CD8-positive, alpha-beta T cell (primary cell): ENCODE measurements at regions of chr1 and their contacts with region 1.

Region 1: DNA sequence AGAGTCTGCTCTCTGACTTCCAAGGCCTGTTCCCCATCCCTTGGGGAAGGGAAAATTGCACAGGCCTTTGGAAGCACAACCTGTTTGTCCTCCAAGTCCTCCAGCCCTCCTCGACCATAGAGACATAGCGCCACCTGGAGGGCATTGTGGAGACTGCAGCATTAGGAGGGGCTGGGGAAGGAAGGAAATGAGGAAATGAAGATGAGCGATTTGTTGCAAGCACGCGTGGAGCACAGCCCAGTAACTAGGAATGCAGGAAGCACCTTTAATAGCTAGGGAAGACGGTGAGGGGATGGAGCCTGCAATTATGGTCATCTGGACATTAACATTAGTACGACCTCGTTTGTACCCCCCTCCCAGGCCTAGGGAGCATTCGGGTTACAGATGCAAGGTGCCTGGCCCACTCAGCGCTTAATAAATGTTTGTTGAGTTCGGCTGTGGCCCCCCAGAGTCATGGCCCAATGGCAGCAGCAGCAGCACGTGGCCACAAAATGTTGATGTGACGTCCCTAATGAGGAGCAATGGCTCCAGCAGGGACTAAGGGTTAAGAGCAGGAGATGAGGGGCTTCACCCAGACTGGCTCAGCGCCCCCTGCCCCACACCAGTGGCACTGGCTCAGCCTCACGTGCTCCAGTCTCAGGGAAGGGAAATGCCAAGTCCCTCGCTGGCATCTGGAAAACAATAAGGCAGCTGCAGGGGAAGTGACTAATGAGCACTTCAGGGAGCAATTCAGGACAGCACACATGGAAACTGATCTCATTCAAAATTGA is 8.0 kb upstream of the CAMK2N1 start:
- DNase-seq: peak; percentile 66 to 92 (median 83)
- ATAC-seq: peak; percentile 90
- H3K4me3 ChIP-seq: no peak overlapping the region
- H3K4me3 Mint-ChIP-seq: no peak overlapping the region
- H3K27ac ChIP-seq: no peak overlapping the region
- H3K27ac Mint-ChIP-seq: no peak overlapping the region
- H3K4me1 ChIP-seq: peaks cover 7% of the 10 kb centered on the region
- H3K4me1 Mint-ChIP-seq: peaks cover 3% of the 10 kb centered on the region
- H3K27me3 ChIP-seq: no peaks in the 10 kb centered on the region
- H3K27me3 Mint-ChIP-seq: no peaks in the 10 kb centered on the region
- CTCF ChIP-seq: peak; percentile 87

Region 2: DNA sequence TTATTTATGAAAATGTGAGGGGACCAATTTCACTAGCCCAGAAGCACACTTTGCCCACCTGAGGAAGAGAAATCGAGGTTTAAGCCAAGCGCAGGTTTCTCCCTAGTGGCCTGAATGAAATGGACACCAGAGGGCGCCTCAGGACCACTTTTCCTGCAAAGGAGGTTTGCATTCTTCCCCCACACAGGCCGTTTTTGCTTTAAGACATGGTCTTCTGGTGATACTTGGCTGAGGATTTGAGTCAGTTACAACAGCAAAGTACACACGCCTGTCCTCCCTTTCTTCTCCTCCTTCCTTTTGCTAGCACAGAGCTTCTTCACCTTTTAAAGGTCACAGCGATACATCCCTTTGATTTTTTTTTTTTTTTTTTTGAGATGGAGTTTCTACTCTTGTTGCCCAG is 576.0 kb before region 1 on chr1:
- CTCF ChIA-PET with region 1: interaction called, 3 read pairs
- POLR2A ChIA-PET with region 1: no interaction called
- intact Hi-C with region 1: loop called in 1 of 2 experiments (anchors 1 kb)
- DNase-seq: peak; percentile 67 to 88 (median 81)
- ATAC-seq: peak; percentile 57
- H3K4me3 ChIP-seq: no peak overlapping the region
- H3K4me3 Mint-ChIP-seq: no peak overlapping the region
- H3K27ac ChIP-seq: no peak overlapping the region
- H3K27ac Mint-ChIP-seq: no peak overlapping the region
- H3K4me1 ChIP-seq: no peaks in the 10 kb centered on the region
- H3K4me1 Mint-ChIP-seq: peaks cover 2% of the 10 kb centered on the region
- H3K27me3 ChIP-seq: no peaks in the 10 kb centered on the region
- H3K27me3 Mint-ChIP-seq: peaks cover 5% of the 10 kb centered on the region
- CTCF ChIP-seq: peak; percentile 88

Region 3: DNA sequence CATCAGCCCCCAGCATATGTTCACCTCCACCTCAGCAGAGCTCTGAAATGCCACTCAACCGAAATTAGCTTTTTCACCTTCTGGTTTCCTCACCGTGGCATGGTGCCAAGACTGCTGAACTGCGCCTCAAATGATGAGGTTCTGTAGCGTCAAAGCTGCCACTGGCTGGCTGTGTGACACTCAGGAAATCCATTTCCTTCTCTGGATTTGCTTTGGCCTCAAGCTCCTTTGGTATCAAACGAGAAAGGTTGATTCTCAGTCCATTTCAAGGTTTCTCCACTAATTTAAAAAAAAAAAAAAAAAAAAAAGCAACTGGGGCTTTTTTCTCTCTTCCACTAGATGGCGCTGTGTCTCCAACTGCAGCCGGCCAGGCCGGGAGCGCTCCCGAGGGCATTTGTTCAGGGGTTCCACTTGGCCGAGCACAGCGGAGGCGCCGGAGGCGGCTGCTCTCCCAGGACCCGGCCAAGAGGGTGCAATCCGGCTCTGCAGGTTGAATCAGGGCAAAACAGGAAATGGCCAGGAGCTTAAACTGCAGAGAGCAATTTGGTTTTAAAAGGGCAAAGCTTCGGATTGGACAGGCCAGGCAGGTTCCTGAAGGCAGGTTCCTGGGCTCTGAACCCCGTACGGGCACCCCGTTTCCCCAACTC is 281.2 kb before region 1 on chr1:
- CTCF ChIA-PET with region 1: interaction called, 75 read pairs
- POLR2A ChIA-PET with region 1: interaction called, 5 read pairs
- intact Hi-C with region 1: loop called (anchors 1 kb)
- DNase-seq: peak; percentile 14 to 70 (median 46)
- ATAC-seq: peak; percentile 55
- H3K4me3 ChIP-seq: no peak overlapping the region
- H3K4me3 Mint-ChIP-seq: peak overlapping the region; percentile 59
- H3K27ac ChIP-seq: no peak overlapping the region
- H3K27ac Mint-ChIP-seq: no peak overlapping the region
- H3K4me1 ChIP-seq: peaks cover 6% of the 10 kb centered on the region
- H3K4me1 Mint-ChIP-seq: peaks cover 5% of the 10 kb centered on the region
- H3K27me3 ChIP-seq: peaks cover 0 to 4% of the 10 kb centered on the region in 2 experiments
- H3K27me3 Mint-ChIP-seq: peaks cover 44% of the 10 kb centered on the region
- CTCF ChIP-seq: peak; percentile 83

Region 4: DNA sequence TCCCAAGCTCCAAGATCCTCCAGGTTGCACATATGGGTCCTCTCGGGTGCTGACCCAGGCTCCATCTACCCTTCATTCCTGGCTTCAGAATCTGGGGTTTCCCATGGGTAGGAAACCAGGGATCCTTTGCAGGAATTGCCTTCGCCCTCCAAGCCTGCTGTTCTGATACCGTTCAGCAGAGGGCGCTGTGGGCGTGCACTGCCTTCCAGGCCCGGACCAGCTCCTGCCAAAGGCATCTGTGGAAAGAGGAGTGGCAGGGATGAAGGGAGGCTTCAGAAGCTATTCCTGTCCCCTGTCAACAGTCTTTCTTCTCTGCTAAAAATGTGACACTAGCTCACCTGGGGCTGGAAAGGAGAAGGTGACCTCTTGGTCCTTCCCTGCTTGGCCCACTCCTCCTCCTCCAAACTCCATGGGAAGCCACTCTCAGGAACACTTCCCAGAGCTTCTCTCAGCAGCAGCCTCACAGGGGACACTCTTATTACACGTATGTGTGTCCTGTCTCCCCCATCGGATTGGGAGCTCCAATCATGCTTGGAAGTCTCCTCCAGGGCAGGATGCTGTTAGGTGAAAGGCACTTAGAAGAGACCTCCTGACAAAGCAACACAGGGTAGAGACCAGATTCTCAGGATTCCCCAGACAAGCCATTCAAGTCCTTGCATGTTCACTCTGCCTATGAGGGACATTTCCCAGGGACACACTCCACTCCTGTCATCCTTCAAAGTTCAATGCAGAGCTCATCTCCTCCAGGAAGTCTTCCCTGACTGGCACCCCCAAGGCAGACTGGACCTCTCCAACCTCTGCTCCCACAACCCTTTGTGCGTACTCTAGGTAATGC is 132.0 kb before region 1 on chr1:
- CTCF ChIA-PET with region 1: interaction called, 11 read pairs
- POLR2A ChIA-PET with region 1: no interaction called
- intact Hi-C with region 1: loop called (anchors 2 to 5 kb)
- DNase-seq: peak in 4 of 9 experiments; percentile 23 to 30 (median 28)
- ATAC-seq: no peak
- H3K4me3 ChIP-seq: no peak overlapping the region
- H3K4me3 Mint-ChIP-seq: no peak overlapping the region
- H3K27ac ChIP-seq: no peak overlapping the region
- H3K27ac Mint-ChIP-seq: no peak overlapping the region
- H3K4me1 ChIP-seq: no peaks in the 10 kb centered on the region
- H3K4me1 Mint-ChIP-seq: peaks cover 4% of the 10 kb centered on the region
- H3K27me3 ChIP-seq: peaks cover 3 to 19% of the 10 kb centered on the region in 2 experiments
- H3K27me3 Mint-ChIP-seq: peaks cover 61% of the 10 kb centered on the region
- CTCF ChIP-seq: peak; percentile 41

Region 5: GRCh38 chr1:20633190-20634064 is 139.4 kb after region 1 on chr1 and contains the start of gene PINK1:
- CTCF ChIA-PET with region 1: interaction called, 10 read pairs
- POLR2A ChIA-PET with region 1: no interaction called
- intact Hi-C with region 1: no loop called
- DNase-seq: peak; percentile 74 to 94 (median 87)
- ATAC-seq: peak; percentile 90
- H3K4me3 ChIP-seq: peak within 1 kb of the TSS; percentile 59 to 62
- H3K4me3 Mint-ChIP-seq: peak within 1 kb of the TSS; percentile 87
- H3K27ac ChIP-seq: peak within 1 kb of the TSS; percentile 46 to 55
- H3K27ac Mint-ChIP-seq: peak within 1 kb of the TSS; percentile 85
- H3K4me1 ChIP-seq: peaks cover 8% of the 10 kb centered on the region
- H3K4me1 Mint-ChIP-seq: peaks cover 9% of the 10 kb centered on the region
- H3K27me3 ChIP-seq: no peaks in the 10 kb centered on the region
- H3K27me3 Mint-ChIP-seq: no peaks in the 10 kb centered on the region
- CTCF ChIP-seq: peak; percentile 98
- total RNA-seq, gene PINK1: 8.0 to 8.3 TPM